ENCODE measurements at regions of chr9 and their contacts with region 1.

Region 1: DNA sequence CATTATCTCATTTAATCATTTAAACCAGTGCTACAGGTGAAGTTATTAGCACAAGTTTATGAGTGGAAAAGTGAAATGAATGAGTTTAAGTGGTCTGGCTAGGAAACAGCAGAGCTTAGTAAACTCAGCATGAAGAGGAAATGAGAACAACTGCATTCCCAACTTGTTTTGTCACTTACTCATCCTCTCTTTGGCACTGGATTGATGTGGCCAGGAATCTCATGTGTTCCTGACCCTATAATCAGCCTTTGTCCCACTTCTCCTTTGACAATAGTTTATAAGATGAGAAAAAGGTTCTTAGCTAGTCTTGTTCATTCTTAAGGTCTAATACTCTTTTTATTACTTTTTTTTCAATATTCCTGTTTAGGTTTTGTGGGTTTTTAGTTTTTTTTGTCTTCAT is 559.2 kb upstream of the TLE4 start:
- DNase-seq: peak; percentile 70
- H3K4me3 ChIP-seq: no peak overlapping the region
- H3K27ac ChIP-seq: peak overlapping the region; percentile 98
- H3K4me1 ChIP-seq: peaks cover 45% of the 10 kb centered on the region
- H3K27me3 ChIP-seq: no peaks in the 10 kb centered on the region
- CTCF ChIP-seq: no peak
- POLR2A ChIP-seq: no peak

Region 2: GRCh38 chr9:78601957-78602565 is 410.5 kb before region 1 on chr9:
- CTCF ChIA-PET with region 1: no interaction called
- POLR2A ChIA-PET with region 1: no interaction called
- dilution Hi-C with region 1: no loop called
- intact Hi-C with region 1: loop called (anchors 2 kb)
- DNase-seq: peak; percentile 70
- H3K4me3 ChIP-seq: no peak overlapping the region
- H3K27ac ChIP-seq: no peak overlapping the region
- H3K4me1 ChIP-seq: peaks cover 10% of the 10 kb centered on the region
- H3K27me3 ChIP-seq: peaks cover 2 to 7% of the 10 kb centered on the region in 2 experiments
- CTCF ChIP-seq: peak; percentile 72 to 81
- POLR2A ChIP-seq: no peak

Region 3: DNA sequence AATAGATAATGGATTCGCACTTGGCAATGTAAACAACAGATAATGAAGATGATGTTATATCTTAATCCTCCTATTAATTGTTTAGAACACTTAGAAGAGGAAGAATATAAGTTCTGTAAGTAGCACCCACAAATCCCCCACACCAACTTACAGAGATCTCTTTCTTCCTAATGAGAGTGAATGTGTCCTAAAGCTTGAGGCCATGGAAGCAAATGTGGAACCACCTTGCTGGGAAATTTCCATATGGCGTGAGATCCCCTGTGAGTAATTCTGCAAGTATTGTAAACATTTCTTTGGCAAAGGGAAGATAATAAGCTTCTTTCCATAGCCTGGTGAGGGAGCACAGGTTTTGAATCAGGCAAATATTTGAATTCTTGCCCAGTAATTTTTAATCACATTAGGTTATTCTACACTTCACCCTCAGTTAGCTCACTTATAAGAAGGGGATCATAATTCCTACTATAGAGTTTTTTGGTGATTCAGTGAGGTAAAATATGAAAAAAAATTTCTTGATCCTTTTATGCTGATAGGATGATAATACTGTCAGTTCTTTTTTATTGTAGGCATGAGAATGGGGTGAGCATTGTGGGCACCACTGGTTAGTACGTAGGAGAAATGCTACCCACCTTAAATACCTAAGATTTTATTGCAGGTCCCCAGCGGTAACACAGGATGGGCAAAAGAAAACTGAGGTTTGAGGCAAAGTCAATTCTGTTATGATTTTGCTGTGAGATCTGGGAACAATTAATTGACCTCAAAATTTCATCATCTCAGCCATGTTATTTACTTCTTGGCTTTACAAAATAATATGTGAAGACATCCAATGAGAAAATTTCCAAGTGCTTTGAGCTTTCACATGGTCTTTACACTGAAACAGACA is 140.9 kb before region 1 on chr9:
- CTCF ChIA-PET with region 1: interaction called, 3 read pairs
- POLR2A ChIA-PET with region 1: no interaction called
- dilution Hi-C with region 1: no loop called
- intact Hi-C with region 1: loop called (anchors 1 kb)
- DNase-seq: peak; percentile 89
- H3K4me3 ChIP-seq: no peak overlapping the region
- H3K27ac ChIP-seq: peak overlapping the region; percentile 83
- H3K4me1 ChIP-seq: peaks cover 17% of the 10 kb centered on the region
- H3K27me3 ChIP-seq: no peaks in the 10 kb centered on the region
- CTCF ChIP-seq: no peak
- POLR2A ChIP-seq: no peak

Region 4: DNA sequence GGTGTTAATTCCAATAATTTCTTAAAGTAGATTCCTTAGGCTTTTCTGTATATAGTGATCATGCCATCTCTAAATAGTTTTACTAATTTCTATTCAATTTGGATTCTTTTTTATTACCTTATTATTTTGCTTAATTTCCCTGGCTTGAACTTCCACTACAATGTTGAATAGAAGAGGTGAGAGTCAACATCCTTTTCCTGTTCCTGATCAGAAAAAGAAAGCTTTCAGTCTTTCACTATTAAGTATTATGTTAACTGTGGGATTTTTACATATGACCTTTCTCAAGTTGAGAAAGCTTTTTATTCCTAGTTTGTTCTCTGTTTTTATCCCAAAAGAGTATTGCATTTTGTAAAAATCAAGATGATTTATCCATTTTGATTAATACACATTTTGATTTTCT is 15.3 kb before region 1 on chr9:
- CTCF ChIA-PET with region 1: interaction called, 3 read pairs
- POLR2A ChIA-PET with region 1: interaction called, 5 read pairs
- dilution Hi-C with region 1: no loop called
- intact Hi-C with region 1: loop called (anchors 2 kb)
- DNase-seq: peak; percentile 85
- H3K4me3 ChIP-seq: peak overlapping the region in 1 of 3 experiments; percentile 23
- H3K27ac ChIP-seq: peak overlapping the region; percentile 63
- H3K4me1 ChIP-seq: peaks cover 19% of the 10 kb centered on the region
- H3K27me3 ChIP-seq: no peaks in the 10 kb centered on the region
- CTCF ChIP-seq: no peak
- POLR2A ChIP-seq: no peak

Region 5: DNA sequence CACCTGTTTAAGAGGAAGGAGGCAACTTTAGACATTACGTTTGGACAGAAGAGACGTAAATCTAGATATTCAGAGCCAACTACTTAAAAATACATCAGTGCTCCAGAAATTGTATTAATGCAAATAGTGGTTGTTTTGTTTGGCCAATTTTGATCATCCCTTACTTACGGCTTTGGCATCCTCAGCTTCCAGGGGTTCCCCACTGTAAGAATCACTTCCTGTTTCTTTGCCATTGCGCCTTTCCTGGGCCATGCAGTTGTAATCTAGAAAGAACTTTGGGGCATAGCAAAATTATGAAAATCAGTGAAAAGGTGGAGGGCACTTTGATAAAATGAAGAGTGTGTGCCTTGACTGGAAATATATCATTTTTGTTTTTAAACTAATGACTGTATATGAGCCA is 22.0 kb after region 1 on chr9:
- CTCF ChIA-PET with region 1: no interaction called
- POLR2A ChIA-PET with region 1: no interaction called
- dilution Hi-C with region 1: no loop called
- intact Hi-C with region 1: no loop called
- DNase-seq: no peak
- H3K4me3 ChIP-seq: no peak overlapping the region
- H3K27ac ChIP-seq: no peak overlapping the region
- H3K4me1 ChIP-seq: no peaks in the 10 kb centered on the region
- H3K27me3 ChIP-seq: no peaks in the 10 kb centered on the region
- CTCF ChIP-seq: no peak
- POLR2A ChIP-seq: no peak

Region 6: DNA sequence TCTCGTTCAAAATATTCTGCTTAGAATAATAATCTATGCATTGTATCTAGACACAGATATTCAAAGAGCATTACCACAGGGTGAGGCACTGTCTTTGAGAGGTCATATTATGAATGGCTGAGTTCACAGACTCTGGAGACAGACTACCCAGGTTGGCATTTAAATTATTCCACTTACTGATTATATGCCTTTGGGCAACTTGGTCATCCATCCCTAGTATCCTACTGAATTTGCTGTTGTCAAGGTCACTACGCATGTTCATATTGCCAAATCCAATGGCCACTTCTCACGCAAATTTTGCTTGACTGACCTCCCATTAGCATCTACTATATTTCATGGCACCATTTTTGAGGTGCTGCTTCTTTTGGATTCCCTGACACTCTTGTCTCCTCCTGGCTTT is 60.6 kb after region 1 on chr9:
- CTCF ChIA-PET with region 1: no interaction called
- POLR2A ChIA-PET with region 1: no interaction called
- dilution Hi-C with region 1: no loop called
- intact Hi-C with region 1: no loop called
- DNase-seq: no peak
- H3K4me3 ChIP-seq: no peak overlapping the region
- H3K27ac ChIP-seq: no peak overlapping the region
- H3K4me1 ChIP-seq: no peaks in the 10 kb centered on the region
- H3K27me3 ChIP-seq: no peaks in the 10 kb centered on the region
- CTCF ChIP-seq: no peak
- POLR2A ChIP-seq: no peak

Region 7: DNA sequence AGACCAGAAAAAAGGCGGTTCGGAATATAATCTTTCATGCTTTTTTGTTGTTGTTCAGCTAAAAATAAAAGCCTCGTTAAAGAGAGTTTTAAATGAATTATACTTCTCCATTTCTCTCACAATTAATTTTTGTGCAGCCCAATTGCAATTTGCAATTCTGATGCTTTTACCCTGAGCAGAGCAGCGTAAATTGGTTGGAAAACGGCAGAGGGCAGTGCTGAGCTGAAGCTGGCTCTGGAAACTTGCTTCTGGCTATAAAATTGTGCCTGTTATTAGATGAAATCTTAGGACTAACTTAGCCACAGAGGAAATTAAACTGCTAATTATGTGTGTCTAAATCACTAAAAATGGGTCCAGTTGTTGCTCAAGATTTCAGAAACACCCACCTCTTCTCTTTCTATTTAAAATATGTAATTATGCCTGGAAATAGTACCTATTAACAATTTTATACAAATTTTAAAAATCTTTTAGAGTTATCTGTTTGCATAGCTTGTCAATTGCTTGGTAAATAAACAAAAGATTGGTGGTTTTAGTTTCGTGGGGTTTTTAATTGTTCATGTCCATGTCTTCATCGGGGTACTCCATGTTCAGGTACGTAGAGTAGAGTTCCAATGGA is 117.4 kb after region 1 on chr9:
- CTCF ChIA-PET with region 1: interaction called, 5 read pairs
- POLR2A ChIA-PET with region 1: no interaction called
- dilution Hi-C with region 1: no loop called
- intact Hi-C with region 1: loop called (anchors 5 kb)
- DNase-seq: peak; percentile 58
- H3K4me3 ChIP-seq: no peak overlapping the region
- H3K27ac ChIP-seq: no peak overlapping the region
- H3K4me1 ChIP-seq: no peaks in the 10 kb centered on the region
- H3K27me3 ChIP-seq: no peaks in the 10 kb centered on the region
- CTCF ChIP-seq: peak; percentile 80 to 86
- POLR2A ChIP-seq: no peak